HAP-1 (cell line): ENCODE measurements at regions of chr9 and their contacts with region 1.

Region 1: DNA sequence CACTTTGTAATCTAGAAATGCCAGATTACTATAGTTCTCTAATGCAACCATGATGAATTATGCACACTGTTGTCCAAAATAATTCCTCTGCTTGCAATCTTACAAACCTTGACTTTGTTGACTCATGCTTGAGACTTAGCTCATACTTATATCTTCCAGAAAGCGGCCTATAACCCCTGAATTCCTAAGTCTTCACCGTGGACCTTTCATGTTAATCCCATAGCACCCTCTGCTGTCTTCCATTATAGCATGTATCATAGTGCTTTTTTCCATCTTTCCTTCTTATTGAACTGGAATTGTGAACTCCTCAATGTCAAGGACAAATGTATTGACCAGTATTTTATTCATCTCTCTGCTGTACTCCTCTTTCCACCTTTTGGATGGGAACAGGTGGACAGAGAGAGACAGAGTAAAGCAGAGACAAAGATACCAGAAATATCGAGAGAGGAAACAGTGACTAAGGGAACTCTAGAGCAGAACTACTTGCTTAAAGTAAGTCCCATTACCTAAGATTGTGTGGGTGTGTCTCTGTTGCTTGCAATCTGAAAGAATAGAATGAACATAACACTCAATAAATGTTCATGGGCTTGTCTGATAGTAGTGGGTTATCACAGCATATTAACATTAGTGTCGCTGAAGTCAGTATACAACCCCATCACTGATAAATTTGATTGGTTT is 110.1 kb downstream of the LURAP1L start:
- DNase-seq: peak in 1 of 2 experiments; percentile 47
- H3K4me3 ChIP-seq: no peak overlapping the region
- H3K4me1 ChIP-seq: no peaks in the 10 kb centered on the region
- H3K27me3 ChIP-seq: no peaks in the 10 kb centered on the region

Region 2: GRCh38 chr9:12702160-12702758 is 182.6 kb before region 1 on chr9:
- in situ Hi-C with region 1: loop called (anchors 25 kb)
- DNase-seq: peak; percentile 69
- H3K4me3 ChIP-seq: no peak overlapping the region
- H3K4me1 ChIP-seq: peaks cover 19% of the 10 kb centered on the region
- H3K27me3 ChIP-seq: no peaks in the 10 kb centered on the region